Heart right ventricle (tissue), 16 donors: ENCODE measurements at regions of chr17 and their contacts with region 1.

Region 1: GRCh38 chr17:51703361-51704341 is 443.3 kb downstream of the UTP18 start:
- DNase-seq: peak; percentile 68 to 83
- ATAC-seq: peak; percentile 87 to 96 (median 91)
- H3K4me3 ChIP-seq: no peak overlapping the region
- H3K27ac ChIP-seq: peak overlapping the region in 9 of 10 donors; percentile 4 to 73 (median 55)
- H3K4me1 ChIP-seq: peaks cover 3 to 26% (median 8%) of the 10 kb centered on the region in 9 donors
- H3K27me3 ChIP-seq: peaks cover 0 to 4% (median 0%) of the 10 kb centered on the region in 7 donors
- CTCF ChIP-seq: no peak

Region 2: DNA sequence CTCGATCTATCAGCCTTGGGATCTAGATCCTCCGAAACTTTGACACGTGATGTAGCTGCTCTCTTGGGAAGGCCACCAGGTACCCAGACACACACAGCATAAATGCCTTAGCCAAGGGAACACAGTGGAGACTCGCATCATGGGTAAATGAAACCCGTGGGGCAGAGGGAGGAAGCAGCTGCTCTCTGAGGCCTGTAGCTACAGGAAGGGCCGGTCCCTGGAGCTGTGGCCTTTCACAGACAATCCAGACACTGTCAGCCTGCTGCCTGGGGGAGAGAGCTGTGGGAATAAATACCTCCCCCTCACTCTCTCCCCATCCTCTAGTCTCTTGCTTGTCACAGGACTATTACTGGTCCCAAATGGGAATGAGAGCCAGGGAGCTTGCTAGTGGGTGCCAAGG is 92.1 kb before region 1 on chr17:
- intact Hi-C with region 1: loop called in 1 of 10 experiments (anchors 5 kb)
- DNase-seq: peak; percentile 9 to 26
- ATAC-seq: peak; percentile 29 to 94 (median 78)
- H3K4me3 ChIP-seq: no peak overlapping the region
- H3K27ac ChIP-seq: peak overlapping the region in 4 of 10 donors; percentile 14 to 53 (median 32)
- H3K4me1 ChIP-seq: peaks cover 0 to 34% (median 6%) of the 10 kb centered on the region in 9 donors
- H3K27me3 ChIP-seq: no peaks in the 10 kb centered on the region
- CTCF ChIP-seq: no peak

Region 3: DNA sequence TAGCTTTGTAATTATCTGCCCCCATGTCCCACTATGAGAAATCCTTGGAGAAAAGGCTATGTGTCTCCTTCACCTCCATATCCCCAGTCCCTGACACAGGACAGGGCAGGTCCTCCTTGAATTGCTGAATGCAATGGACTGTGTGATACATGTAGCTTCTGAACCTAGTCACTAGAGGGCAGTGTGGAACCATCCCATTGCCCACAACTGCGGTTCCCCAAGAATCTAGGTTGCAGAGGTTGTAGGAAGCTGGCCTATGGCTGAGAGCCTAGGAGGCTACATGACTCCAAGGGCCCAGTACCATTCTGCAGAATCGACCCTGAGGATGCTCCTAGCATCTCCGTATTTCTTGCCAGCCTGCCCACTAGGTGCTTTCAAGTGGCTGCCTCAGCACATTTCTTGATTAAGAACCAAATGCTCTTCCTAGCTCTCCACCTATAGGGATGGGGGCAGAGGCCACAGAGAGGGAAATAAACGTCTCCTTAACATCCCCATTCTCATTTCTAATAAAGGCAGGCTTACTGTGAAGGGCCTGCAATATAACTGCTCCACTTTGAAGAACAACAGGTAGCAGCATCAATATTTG is 60.8 kb after region 1 on chr17:
- intact Hi-C with region 1: loop called in 1 of 10 experiments (anchors 10 kb)
- DNase-seq: peak in 1 of 2 donors; percentile 32
- ATAC-seq: peak in 6 of 8 donors; percentile 60 to 83 (median 70)
- H3K4me3 ChIP-seq: no peak overlapping the region
- H3K27ac ChIP-seq: no peak overlapping the region
- H3K4me1 ChIP-seq: no peaks in the 10 kb centered on the region
- H3K27me3 ChIP-seq: peaks cover 0 to 44% (median 14%) of the 10 kb centered on the region in 7 donors
- CTCF ChIP-seq: peak; percentile 45 to 88 (median 80)